Dorsolateral prefrontal cortex (tissue), 120 donors: ENCODE measurements at regions of chr1 and their contacts with region 1.

Region 1: DNA sequence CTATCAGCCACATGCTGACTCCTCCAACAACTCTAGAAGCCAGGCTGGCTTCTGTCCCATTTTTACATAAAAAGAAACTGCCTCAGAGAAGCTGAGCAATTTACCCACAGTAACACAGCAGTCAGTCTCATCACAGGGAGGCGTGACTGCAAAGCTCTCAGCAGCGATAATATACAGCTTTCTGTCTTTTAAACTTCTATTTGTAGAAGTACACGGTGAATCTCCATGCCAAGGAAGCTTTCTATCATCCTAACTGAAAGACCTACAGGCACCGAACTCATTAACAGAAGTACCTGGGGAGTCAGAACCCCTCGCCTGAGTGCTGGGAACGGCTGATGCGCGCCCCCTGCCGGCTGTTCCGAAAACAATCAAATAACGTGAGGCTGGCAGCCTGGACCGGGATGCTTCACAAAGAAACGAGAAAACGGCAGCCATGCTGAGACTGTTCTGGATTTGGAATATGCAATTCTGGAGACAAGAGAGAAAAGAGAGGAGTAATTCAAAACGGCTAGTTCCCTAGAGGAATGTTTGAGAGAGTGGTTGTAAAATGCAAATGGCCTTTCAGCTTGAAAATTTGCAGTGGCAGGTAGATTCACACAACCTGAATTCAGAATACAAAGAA is 43.5 kb upstream of the RAB4A start:
- DNase-seq: peak; percentile 77 to 93 (median 90)
- H3K4me3 ChIP-seq: peak overlapping the region in 5 of 59 donors; percentile 2 to 33 (median 8)
- H3K27ac ChIP-seq: peak overlapping the region in 58 of 59 donors; percentile 13 to 100 (median 98)
- H3K27me3 ChIP-seq: no peaks in the 10 kb centered on the region
- CTCF ChIP-seq: peak; percentile 63 to 97 (median 92)

Region 2: GRCh38 chr1:228664399-228664914 is 563.0 kb before region 1 on chr1:
- intact Hi-C with region 1: loop called in 1 of 2 experiments (anchors 1 kb)
- DNase-seq: peak; percentile 50 to 88 (median 67)
- H3K4me3 ChIP-seq: peak overlapping the region in 4 of 59 donors; percentile 16 to 21 (median 19)
- H3K27ac ChIP-seq: peak overlapping the region in 2 of 59 donors; percentile 4 to 41
- H3K27me3 ChIP-seq: no peaks in the 10 kb centered on the region
- CTCF ChIP-seq: peak; percentile 73 to 96 (median 88)

Region 3: DNA sequence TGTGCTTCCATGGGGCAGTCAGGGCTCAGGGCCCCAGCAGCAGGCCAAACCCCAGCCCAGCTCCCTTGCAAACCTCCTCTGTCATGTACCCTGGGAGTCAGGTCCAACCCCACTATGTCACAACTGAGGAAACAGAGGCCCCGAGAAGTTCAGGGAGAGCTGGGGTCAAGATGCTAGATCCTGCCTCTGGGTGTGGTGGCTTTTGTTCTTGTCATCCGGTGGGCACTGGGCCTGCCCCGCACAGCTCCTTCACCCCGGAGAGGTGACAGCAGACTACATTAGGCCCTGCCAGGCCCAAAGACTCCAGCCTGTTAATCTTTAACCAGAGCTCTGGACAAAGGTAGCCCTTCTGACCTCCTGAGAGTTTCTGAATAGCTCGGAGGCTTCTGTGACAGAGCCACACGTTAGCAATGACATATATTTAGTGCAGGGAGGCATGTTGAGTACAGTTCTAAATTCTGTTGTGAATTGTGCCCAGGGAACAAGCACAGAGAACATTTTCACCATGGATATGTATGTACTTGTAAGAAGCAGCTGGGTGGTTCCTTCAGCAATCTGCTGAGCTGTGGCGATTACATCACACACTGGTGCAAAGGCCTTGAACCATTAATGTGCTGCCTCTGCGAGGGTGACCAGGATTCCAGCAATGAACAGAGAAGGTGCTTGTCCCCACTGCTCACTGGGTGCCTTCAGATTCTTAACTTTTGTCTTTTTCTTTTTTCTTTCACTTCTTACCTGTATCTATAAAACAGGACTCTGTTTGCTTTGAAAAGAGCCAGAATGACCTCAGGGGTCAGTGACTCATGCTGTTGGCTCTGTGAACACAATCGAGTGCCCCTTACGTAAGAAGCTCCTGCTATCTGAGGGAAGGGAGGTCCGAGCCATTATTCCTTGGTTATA is 389.3 kb before region 1 on chr1:
- intact Hi-C with region 1: loop called (anchors 10 kb)
- DNase-seq: no peak
- H3K4me3 ChIP-seq: no peak overlapping the region
- H3K27ac ChIP-seq: peak overlapping the region in 58 of 59 donors; percentile 3 to 99 (median 93)
- H3K27me3 ChIP-seq: peaks cover 0 to 9% (median 0%) of the 10 kb centered on the region in 45 donors
- CTCF ChIP-seq: no peak

Region 4: GRCh38 chr1:229003233-229004031 is 224.0 kb before region 1 on chr1:
- intact Hi-C with region 1: loop called (anchors 1 to 5 kb)
- DNase-seq: peak; percentile 67 to 97 (median 88)
- H3K4me3 ChIP-seq: no peak overlapping the region
- H3K27ac ChIP-seq: peak overlapping the region; percentile 44 to 97 (median 90)
- H3K27me3 ChIP-seq: no peaks in the 10 kb centered on the region
- CTCF ChIP-seq: peak in 15 of 56 donors; percentile 5 to 42 (median 24)

Region 5: DNA sequence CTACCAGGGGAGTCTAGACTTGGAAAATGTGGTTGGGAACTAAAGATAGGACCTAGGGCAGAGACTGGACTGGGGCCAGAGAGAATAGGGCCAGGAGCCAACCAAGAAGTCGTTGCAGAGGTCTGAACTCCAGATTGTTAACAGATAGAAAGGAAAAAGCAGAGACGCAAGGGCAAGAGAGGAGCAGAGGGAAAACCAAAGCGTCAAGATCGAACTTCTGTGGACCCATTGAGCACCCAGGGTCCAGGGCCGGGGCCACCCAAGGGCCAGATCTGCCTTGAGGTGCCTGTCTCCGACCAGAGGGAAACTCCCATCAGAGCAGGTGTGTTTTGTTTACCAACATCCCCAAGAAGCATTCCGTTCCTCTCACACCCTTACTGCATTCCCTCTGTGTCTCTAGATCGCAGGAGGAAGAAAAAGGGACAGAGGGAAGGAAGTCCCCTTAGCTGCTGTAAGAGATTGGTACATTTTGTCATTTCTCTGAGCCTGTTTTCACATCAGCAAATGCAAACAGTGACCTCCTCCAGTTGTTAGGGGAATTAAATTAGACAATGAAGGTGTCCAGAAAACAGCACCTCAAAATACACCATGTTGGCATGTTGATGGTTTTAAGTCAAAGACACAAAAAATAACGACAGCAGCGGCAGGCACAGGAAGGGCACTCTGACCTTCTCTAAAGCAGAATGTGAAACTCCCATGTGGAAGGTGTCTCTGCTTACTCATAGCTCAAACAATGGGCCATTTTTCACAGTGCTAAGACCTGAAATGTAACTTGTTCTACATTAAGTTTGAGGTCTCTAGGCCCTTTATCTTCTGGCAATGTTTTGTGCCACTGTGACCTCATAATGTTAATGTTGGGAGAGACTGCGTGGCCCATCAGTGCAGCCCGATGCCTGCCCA is 62.3 kb before region 1 on chr1:
- intact Hi-C with region 1: loop called in 1 of 2 experiments (anchors 10 kb)
- DNase-seq: no peak
- H3K4me3 ChIP-seq: no peak overlapping the region
- H3K27ac ChIP-seq: no peak overlapping the region
- H3K27me3 ChIP-seq: no peaks in the 10 kb centered on the region
- CTCF ChIP-seq: no peak

Region 6: GRCh38 chr1:229310833-229311232 is 83.4 kb after region 1 on chr1:
- intact Hi-C with region 1: no loop called
- DNase-seq: no peak
- H3K4me3 ChIP-seq: no peak overlapping the region
- H3K27ac ChIP-seq: peak overlapping the region in 1 of 59 donors; percentile 11
- H3K27me3 ChIP-seq: no peaks in the 10 kb centered on the region
- CTCF ChIP-seq: no peak

Region 7: DNA sequence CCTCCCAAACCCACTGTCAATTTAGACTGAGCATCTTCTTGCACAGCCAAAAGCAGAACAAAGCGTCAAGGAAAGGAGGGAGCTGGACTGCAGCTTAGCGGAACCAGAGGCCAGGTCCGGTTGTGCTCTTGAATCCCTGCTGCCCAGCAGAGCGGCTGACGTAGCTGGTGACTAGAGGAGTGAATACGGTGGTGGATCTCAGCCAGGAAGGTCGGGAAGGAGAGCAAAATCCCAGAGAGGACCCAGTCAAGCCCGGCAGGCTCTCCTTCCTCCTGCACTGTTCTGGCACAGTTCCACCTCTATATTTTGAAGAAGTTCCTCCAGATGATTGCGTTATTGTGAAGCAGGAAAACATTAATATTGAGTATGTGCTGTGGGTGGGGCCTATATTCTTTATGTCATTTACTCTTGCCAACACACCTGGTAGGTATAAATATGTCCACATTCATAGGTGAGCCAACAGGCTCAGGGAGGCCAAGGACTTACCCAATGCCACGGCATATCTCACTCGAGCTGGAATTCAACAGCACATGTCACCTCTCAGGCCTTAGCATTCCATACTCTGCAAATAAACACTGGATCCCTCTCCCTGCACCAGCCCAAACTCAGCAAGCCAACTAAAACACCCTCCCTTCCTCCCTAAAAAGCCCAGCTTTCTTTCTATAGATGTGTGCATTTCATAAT is 354.7 kb after region 1 on chr1:
- intact Hi-C with region 1: no loop called
- DNase-seq: peak in 2 of 10 donors; percentile 25 to 54
- H3K4me3 ChIP-seq: peak overlapping the region in 7 of 59 donors; percentile 9 to 31 (median 17)
- H3K27ac ChIP-seq: peak overlapping the region in 17 of 59 donors; percentile 0 to 55 (median 30)
- H3K27me3 ChIP-seq: no peaks in the 10 kb centered on the region
- CTCF ChIP-seq: no peak